ENCODE measurements at regions of chr1 and their contacts with region 1.

Region 1: DNA sequence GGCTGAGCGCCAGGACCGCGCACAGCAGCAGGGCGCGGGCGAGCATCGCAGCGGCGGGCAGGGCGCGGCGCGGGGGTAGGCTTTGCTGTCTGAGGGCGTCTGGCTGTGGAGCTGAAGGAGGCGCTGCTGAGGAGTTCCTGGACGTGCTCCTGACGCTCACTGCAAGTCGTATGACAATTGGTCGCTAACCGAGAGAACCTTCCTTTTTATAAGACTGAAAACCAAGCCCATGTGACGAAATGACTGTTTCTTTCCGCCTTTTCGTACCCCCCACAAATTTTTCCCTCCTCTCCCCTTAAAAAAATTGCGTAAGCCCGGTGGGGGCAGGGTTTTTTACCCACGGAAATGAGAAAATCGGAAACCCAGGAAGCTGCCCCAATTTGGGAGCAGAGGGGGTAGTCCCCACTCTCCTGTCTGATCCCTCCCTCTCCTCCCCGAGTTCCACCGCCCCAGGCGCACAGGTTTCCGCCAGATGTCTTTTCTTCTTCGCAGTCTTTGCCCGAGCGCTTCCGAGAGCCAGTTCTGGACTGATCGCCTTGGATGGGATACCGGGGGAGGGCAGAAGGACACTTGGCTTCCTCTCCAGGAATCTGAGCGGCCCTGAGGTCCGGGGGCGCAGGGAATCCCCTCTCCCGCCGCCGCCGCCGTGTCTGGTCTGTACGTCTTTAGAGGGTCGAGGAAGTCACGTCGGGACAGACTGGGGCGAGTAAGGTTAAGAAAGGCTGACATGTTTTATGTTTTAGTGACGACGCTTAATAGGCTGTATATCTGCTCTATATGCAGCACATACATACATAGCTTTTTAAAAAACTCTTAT is at the start of gene PTGS2:
- DNase-seq: peak; percentile 90
- H3K27ac ChIP-seq: peak within 1 kb of the TSS; percentile 92
- CTCF ChIP-seq: peak; percentile 74

Region 2: DNA sequence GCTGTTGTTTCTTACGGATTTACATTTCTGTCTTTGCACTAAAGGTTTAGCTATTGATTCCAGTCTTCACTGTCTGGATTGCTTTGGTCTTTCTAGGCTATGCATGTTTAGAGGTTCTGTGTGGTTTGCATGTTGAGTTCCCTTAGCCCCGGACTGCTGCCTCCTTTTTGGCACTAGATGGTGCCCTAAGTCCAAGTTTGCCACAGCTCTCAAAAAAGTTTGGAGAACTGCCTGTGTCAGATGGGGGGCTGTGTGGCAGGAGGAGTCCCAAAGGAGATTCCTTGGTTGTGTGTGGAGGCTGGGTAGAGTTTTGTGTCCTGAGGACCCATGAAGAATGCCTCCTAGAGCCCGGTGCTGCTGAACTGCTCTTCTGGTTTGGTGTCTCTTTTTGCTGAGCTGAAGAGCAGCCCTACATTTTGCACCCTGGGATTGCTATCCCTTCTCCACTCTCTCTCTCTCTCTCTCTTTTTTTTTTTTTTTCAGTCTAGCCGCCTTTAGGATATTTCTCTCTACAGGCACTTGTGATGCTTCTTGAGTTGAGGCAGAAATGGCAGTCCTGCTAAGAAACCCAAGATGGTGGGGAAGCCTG is 74.6 kb before region 1 on chr1:
- CTCF ChIA-PET with region 1: interaction called, 24 read pairs
- POLR2A ChIA-PET with region 1: no interaction called
- DNase-seq: peak; percentile 35
- H3K27ac ChIP-seq: no peak overlapping the region
- CTCF ChIP-seq: peak; percentile 72

Region 3: GRCh38 chr1:186611156-186611555 is 69.3 kb before region 1 on chr1:
- CTCF ChIA-PET with region 1: interaction called, 24 read pairs
- POLR2A ChIA-PET with region 1: no interaction called
- DNase-seq: no peak
- H3K27ac ChIP-seq: no peak overlapping the region
- CTCF ChIP-seq: no peak